Adrenal gland (tissue), 19 donors: ENCODE measurements at regions of chr11 and their contacts with region 1.

Region 1: GRCh38 chr11:78212586-78213371 is 24.1 kb downstream of the USP35 start:
- DNase-seq: peak; percentile 81 to 90 (median 88)
- H3K4me3 ChIP-seq: no peak overlapping the region
- H3K27ac ChIP-seq: peak overlapping the region in 3 of 5 donors; percentile 10 to 76 (median 75)
- H3K4me1 ChIP-seq: peaks cover 0 to 18% of the 10 kb centered on the region in 2 donors
- H3K27me3 ChIP-seq: no peaks in the 10 kb centered on the region
- CTCF ChIP-seq: no peak
- POLR2A ChIP-seq: no peak

Region 2: GRCh38 chr11:78564490-78565467 is 352.0 kb after region 1 on chr11:
- intact Hi-C with region 1: loop called in 1 of 2 experiments (anchors 10 kb)
- DNase-seq: peak in 5 of 7 donors; percentile 28 to 66 (median 58)
- H3K4me3 ChIP-seq: no peak overlapping the region
- H3K27ac ChIP-seq: no peak overlapping the region
- H3K4me1 ChIP-seq: peaks cover 8 to 31% of the 10 kb centered on the region in 2 donors
- H3K27me3 ChIP-seq: no peaks in the 10 kb centered on the region
- CTCF ChIP-seq: peak; percentile 73 to 93 (median 80)
- POLR2A ChIP-seq: no peak